Motor neuron (in vitro differentiated cells): ENCODE measurements at regions of chr5 and their contacts with region 1.

Region 1: DNA sequence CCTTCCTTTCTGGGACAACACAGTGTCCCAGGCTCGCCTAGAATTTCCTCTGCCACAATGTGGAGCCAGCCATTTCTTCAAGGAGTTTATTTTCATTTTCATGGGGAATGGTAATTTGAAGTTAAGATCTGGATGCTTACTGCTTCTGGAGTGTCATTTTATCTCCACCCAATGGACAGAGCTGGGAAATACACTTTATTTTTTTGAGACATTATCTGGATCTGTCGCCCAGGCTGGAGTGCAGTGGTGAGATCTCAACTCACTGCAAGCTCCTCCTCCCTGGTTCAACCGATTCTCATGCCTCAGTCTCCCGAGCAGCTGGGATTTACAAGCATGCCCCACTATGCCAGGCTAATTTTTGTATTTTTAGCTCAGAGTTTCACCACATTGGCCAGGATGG is 12.7 kb upstream of the THG1L start:
- ATAC-seq: peak; percentile 68 to 93 (median 82)
- H3K4me3 ChIP-seq: no peak overlapping the region
- H3K27ac ChIP-seq: no peak overlapping the region
- H3K4me1 ChIP-seq: no peaks in the 10 kb centered on the region

Region 2: DNA sequence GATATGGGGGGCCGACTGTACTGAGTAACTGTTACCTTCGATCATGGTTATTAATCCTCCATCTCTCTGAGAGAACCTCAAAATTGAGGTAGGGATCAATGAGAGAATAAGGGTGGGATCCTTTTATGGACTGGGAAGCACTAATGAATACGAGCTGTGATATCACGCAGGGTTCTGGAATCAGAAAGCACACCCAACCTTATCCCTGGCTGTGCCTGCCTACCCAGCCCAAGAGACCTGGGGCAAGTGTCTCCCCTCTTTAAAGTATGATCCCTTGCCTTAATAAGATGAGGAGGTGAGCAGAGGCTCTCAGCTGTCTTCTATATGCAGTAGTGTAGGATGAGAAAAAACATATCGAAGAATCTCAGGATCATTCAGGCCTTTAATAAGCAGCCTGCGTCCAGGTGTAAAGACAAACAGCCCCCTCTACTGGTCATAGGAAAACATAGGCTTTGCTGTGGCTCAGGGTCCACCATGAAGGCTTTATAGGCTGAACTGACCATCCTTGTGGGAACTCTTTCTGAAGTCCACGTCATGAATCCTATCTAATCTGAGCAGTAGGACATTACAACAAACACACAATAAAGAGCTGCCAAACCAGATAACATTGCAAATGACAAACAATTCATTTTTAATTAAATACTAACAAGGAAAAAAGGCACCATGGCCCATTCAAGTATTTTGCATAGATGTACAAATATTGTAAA is 241.7 kb before region 1 on chr5:
- in situ Hi-C with region 1: loop called in 1 of 9 experiments (anchors 25 kb)
- ATAC-seq: peak; percentile 79 to 98 (median 89)
- H3K4me3 ChIP-seq: no peak overlapping the region
- H3K27ac ChIP-seq: no peak overlapping the region
- H3K4me1 ChIP-seq: no peaks in the 10 kb centered on the region

Region 3: GRCh38 chr5:157670662-157671591 is 47.6 kb before region 1 on chr5 and contains the start of gene C5orf52:
- in situ Hi-C with region 1: no loop called
- ATAC-seq: peak; percentile 78 to 98 (median 95)
- H3K4me3 ChIP-seq: peak within 1 kb of the TSS; percentile 39 to 54 (median 47)
- H3K27ac ChIP-seq: peak within 1 kb of the TSS in 1 of 2 donors; percentile 6
- H3K4me1 ChIP-seq: peaks cover 0 to 4% of the 10 kb centered on the region in 2 donors
- total RNA-seq, gene C5orf52: 0.56 to 1.2 TPM in 2 of 8 experiments, not detected in the others